Right ventricle myocardium inferior (tissue), 1 donor: ENCODE measurements at regions of chr15 and their contacts with region 1.

Region 1: GRCh38 chr15:36579792-36580431 is 486 bp downstream of the CDIN1 start:
- DNase-seq: no peak
- ATAC-seq: peak; percentile 39

Region 2: DNA sequence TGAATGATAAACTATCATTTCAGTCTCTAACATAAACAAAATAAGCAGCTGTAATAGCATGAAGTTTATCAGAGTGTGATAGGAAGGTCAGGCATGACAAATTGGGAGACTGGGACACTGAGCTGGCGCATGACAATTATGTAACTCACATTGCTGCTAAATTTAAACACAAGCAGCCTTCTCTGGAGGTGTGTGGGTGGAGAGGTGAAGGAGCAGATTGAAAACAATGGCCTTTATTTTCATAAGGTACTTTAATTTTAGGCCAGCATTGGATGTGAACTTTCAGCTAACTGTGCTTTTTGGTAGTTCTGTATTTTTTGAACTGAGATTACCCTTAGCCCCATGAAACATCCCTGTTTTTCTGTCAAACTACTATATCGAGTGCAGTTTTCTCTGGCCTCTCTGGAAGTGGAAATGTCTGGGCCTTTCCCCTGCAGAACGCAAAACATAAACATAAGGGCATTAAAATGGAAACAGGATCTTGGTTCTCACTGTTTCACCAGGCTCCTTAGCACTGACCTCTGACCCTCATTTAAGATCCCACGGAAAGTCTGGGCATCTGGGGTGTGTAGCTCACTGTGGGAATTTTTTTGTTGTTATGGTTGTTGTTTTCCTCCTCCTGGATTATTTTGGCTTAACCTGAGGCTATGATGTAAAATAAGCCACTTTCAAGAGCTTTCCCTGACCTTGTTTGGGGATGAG is 873.9 kb before region 1 on chr15:
- intact Hi-C with region 1: loop called (anchors 5 kb)
- DNase-seq: no peak
- ATAC-seq: peak; percentile 90

Region 3: GRCh38 chr15:36617529-36618196 is 37.8 kb after region 1 on chr15:
- intact Hi-C with region 1: no loop called
- DNase-seq: no peak
- ATAC-seq: no peak